Naive thymus-derived CD8-positive, alpha-beta T cell (primary cell): ENCODE measurements at regions of chr3 and their contacts with region 1.

Region 1: GRCh38 chr3:32467333-32468070 is 35.1 kb downstream of the CMTM6 start:
- DNase-seq: peak; percentile 65 to 86 (median 82)
- ATAC-seq: peak; percentile 88 to 91
- H3K4me3 Mint-ChIP-seq: peak overlapping the region; percentile 50 to 78 (median 70)
- H3K27ac Mint-ChIP-seq: peak overlapping the region in 9 of 10 donors; percentile 73 to 94 (median 92)
- H3K4me1 Mint-ChIP-seq: peaks cover 32 to 62% (median 53%) of the 10 kb centered on the region in 4 donors
- H3K27me3 Mint-ChIP-seq: no peaks in the 10 kb centered on the region

Region 2: DNA sequence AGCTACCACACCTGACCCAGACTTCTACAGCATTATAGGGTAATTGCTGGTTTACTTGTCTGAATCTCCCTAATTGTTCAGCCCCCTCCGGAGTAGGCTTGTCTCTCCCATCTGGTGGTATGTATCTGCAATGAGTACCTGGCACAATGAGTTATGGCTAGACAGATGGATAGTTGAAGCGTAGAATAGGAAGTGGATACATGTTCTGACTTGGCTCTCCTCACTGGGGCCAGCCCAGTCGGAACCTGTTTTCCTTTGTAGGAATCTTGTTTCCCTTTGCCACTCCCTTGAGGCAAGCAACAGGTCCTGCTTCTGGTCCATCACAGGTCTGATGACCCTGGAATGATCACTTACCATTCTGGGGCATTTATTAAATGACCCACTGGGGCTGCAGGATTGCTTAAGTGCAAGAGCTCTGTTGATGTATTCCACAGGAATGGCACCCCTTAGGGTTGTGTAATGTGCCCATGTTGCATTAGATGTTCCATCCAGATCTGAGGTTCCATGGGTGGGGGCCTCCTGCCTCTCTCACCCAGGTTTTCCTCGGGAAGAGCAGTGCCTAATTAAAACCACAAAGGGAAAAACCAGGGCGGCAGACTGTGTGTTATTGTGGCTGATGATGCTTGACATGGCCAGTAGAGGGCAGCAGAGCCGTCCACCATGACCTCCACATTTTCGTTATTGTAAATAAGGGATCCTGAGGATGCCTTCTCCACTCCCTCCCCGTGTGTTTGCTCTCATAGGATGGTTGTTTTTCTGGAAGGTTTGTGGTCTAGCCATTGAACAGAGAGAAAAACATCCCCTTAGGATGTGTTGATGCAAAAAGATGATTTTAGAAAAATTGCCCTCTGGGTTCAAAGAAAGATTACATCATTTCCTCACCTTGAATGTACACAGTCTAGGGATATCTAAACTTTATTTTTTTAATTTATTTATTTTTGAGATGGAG is 171.0 kb before region 1 on chr3:
- POLR2A ChIA-PET with region 1: interaction called, 12 read pairs
- DNase-seq: peak; percentile 27 to 70 (median 56)
- ATAC-seq: peak; percentile 81 to 82
- H3K4me3 Mint-ChIP-seq: peak overlapping the region; percentile 43 to 77 (median 58)
- H3K27ac Mint-ChIP-seq: peak overlapping the region; percentile 54 to 95 (median 85)
- H3K4me1 Mint-ChIP-seq: peaks cover 12 to 24% (median 21%) of the 10 kb centered on the region in 4 donors
- H3K27me3 Mint-ChIP-seq: no peaks in the 10 kb centered on the region

Region 3: GRCh38 chr3:32374788-32375595 is 92.5 kb before region 1 on chr3:
- POLR2A ChIA-PET with region 1: interaction called, 51 read pairs
- DNase-seq: peak; percentile 14 to 87 (median 74)
- ATAC-seq: peak; percentile 26 to 43
- H3K4me3 Mint-ChIP-seq: peak overlapping the region in 2 of 10 donors; percentile 34 to 54
- H3K27ac Mint-ChIP-seq: peak overlapping the region; percentile 1 to 96 (median 86)
- H3K4me1 Mint-ChIP-seq: peaks cover 11 to 44% (median 40%) of the 10 kb centered on the region in 4 donors
- H3K27me3 Mint-ChIP-seq: no peaks in the 10 kb centered on the region

Region 4: GRCh38 chr3:32414520-32415202 is 52.8 kb before region 1 on chr3:
- POLR2A ChIA-PET with region 1: interaction called, 353 read pairs
- DNase-seq: peak in 7 of 10 donors; percentile 39 to 72 (median 64)
- ATAC-seq: peak; percentile 82 to 96
- H3K4me3 Mint-ChIP-seq: peak overlapping the region; percentile 58 to 78 (median 68)
- H3K27ac Mint-ChIP-seq: peak overlapping the region; percentile 96 to 100 (median 98)
- H3K4me1 Mint-ChIP-seq: peaks cover 42 to 91% (median 85%) of the 10 kb centered on the region in 4 donors
- H3K27me3 Mint-ChIP-seq: no peaks in the 10 kb centered on the region

Region 5: DNA sequence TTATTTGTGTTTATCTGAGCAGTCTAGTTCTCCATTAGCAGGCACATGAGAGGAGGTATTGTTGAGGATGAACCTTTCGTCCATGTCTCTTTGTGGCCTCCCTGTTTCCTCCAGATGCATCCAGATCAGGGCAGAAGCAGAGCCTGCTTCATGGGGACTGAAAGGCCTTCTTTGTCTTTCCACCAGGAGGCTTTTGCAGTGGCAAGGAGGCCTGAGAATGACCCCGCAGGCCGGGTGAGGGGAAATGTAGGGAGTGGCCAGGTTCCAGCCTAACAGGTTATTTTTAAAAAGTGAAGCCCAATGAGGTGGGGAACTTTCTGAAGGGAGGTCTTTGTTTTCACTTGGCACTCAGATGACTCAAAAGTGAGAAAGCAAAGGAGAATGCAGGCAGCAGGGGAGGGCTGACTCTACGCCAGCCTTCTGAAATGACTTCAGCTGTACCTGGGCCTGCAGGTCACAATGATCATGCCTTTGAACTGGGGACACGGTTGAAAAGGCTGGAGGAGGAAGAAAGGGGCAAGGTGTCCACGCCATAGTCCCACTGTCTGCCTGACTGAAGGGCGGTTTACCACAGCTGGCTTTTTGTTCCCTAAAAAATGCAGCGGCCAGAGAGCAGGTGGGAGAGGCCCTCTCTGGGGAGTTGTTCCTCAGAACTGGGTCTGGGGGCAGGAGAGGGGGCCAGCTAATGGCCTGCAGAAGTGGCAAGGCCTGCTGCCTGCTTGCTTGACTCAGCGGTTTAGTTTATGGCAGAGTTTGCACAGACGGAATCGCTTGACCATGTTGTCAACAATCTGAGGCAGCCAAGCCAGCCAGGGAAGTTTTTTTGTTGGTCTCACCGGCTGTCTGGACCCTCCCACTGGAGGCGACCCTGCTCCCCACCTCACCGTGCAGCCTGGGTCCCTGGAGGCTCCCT is 47.1 kb before region 1 on chr3:
- POLR2A ChIA-PET with region 1: interaction called, 353 read pairs
- DNase-seq: peak in 1 of 10 donors; percentile 36
- ATAC-seq: peak; percentile 31 to 48
- H3K4me3 Mint-ChIP-seq: peak overlapping the region; percentile 68 to 83 (median 79)
- H3K27ac Mint-ChIP-seq: peak overlapping the region; percentile 93 to 100 (median 97)
- H3K4me1 Mint-ChIP-seq: peaks cover 60 to 100% (median 97%) of the 10 kb centered on the region in 4 donors
- H3K27me3 Mint-ChIP-seq: no peaks in the 10 kb centered on the region

Region 6: DNA sequence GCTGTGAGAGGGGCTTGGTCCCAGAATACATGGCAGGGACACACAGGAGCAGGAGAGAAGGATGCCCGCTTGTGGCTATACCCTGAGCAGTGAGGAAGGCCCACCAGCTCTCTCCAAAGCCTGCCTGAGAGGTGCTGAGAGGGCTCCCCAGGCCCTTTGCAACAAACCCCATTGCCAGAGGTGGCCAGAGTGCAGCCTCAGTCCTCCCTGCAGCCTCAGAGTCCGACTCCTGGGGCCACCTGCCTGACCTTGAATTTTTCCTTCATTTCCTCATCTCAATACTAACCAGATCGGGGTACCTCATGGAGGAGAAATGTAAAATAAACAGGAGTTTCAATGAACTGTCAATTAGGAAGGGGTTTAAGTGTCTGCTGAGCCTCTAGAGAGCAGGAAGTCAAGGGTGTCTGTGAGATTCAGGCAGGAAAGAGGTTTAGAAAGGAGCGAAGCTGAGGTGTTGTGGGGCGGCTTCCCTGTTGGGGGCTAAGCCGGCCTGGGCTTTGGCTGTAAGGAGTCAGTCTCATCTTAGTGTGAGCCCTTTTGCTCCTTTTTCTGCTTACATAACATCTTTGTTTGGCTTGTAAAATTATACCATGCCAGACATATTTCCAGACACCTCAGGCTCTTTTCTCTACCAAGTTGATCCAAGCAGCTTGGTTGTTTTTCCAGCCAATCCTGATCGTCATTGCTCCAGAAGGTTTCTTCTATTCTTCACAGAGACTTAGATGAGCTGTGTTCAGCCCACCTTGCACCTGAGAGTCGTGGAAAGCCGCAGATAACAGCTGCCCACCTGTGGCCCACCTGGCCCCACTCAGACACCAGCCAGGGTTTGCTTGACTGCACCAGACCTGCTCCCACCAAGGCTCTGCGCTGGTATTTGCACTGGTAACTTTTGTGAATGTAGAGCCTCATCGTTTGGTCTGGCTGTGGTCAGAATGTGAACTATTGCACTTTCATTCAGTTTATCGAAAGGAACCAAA is 39.1 kb before region 1 on chr3:
- POLR2A ChIA-PET with region 1: interaction called, 353 read pairs
- DNase-seq: peak in 8 of 10 donors; percentile 21 to 68 (median 53)
- ATAC-seq: peak; percentile 56 to 63
- H3K4me3 Mint-ChIP-seq: peak overlapping the region; percentile 53 to 84 (median 77)
- H3K27ac Mint-ChIP-seq: peak overlapping the region; percentile 96 to 100 (median 98)
- H3K4me1 Mint-ChIP-seq: peaks cover 42 to 96% (median 95%) of the 10 kb centered on the region in 4 donors
- H3K27me3 Mint-ChIP-seq: no peaks in the 10 kb centered on the region

Region 7: GRCh38 chr3:32448686-32449474 is 18.6 kb before region 1 on chr3:
- POLR2A ChIA-PET with region 1: no interaction called
- DNase-seq: no peak
- ATAC-seq: no peak
- H3K4me3 Mint-ChIP-seq: no peak overlapping the region
- H3K27ac Mint-ChIP-seq: peak overlapping the region in 9 of 10 donors; percentile 25 to 92 (median 48)
- H3K4me1 Mint-ChIP-seq: peaks cover 20 to 54% (median 51%) of the 10 kb centered on the region in 4 donors
- H3K27me3 Mint-ChIP-seq: no peaks in the 10 kb centered on the region

Region 8: GRCh38 chr3:32493437-32494414 is 26.2 kb after region 1 on chr3:
- POLR2A ChIA-PET with region 1: no interaction called
- DNase-seq: no peak
- ATAC-seq: no peak
- H3K4me3 Mint-ChIP-seq: no peak overlapping the region
- H3K27ac Mint-ChIP-seq: no peak overlapping the region
- H3K4me1 Mint-ChIP-seq: peaks cover 4 to 32% (median 18%) of the 10 kb centered on the region in 4 donors
- H3K27me3 Mint-ChIP-seq: no peaks in the 10 kb centered on the region